ENCODE measurements at regions of chr11 and their contacts with region 1.

Region 1: GRCh38 chr11:34585735-34586487 is 35.0 kb upstream of the EHF start:
- DNase-seq: peak; percentile 41
- CTCF ChIP-seq: peak; percentile 53

Region 2: DNA sequence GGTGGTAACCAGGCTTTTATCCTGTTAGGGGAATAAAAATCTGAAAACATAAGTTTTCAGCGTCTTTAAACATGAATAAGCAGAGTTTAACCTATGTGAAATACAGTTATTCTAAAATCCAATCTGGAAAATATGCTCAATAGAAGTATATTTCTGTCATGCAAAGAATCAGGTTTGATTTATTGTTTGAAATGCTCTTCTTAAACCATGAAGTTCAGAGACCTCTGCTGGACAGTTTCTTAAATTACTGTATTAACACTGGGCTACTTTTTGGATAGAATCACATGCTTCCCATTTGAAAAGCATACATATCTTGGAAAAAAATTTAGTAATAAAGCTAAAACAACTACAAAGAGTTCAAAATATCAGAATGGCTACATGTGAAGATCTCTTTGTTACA is 304.9 kb after region 1 on chr11:
- in situ Hi-C with region 1: loop called (anchors 10 kb)
- DNase-seq: peak; percentile 16
- CTCF ChIP-seq: peak; percentile 52

Region 3: DNA sequence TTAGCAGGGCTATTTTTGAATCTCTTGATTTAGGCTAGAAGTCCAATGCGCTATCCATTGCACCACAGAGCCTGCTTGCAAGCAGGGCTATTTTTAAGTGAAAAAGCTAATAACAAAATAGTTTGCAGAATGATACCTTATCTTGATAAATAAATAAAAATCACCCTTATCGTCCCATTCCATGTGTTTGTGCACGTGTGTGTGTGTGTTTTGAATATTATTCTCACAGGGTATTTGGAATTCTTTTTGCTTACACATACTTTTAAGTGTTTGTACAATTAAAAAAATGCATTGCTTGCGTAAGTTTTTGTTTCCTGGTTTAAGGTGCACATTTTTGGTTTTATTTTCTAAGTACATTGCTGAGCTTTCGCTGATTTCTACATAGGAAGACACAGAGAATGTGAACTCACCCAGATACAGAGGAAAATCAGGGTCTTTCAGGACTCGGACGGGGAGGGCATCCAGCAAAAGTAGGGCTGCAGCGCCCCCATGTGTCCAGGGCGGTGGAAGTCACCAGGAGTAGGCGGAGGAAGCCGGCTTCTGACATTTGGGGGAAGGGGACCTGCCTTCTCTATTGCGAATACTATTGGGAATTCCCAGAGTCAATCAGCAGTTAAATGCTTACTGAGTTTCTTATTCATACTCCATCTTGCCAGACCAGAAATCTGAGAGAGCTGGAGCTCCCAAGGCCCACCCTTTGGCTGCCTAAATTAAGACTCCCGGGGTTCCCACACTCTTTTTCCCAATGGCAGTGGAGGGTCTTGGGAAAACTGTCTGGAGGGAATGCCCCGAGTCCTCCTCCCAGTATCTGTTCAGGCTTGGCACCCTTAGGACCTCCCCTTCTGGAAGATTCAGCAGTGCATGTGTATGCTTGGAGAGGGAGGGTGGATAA is 806.3 kb after region 1 on chr11:
- in situ Hi-C with region 1: loop called (anchors 25 kb)
- DNase-seq: peak; percentile 67
- CTCF ChIP-seq: peak; percentile 94

Measured in GM13977 (cell line).